Right cardiac atrium (tissue), 5 donors: ENCODE measurements at regions of chr18 and their contacts with region 1.

Region 1: DNA sequence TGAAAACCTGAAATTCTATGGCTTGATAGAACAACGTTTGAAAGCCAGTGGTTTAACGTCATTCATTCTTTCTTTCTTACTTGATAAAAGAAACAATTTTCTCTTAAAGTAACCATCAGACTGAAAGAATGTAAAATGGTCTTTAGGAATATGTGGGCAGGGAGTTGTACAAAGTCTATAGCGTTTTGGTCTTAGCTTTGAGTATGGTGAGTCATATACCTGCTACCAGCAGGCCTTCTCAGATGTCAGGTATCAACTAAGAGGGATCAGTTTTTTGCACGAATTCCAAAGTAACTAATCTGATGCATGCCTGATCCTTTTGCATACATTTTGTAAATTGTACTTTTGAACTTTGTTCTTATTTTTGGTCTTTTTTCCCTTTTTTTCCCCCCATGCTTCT is 101.5 kb upstream of the DSEL start:
- DNase-seq: no peak
- ATAC-seq: no peak
- H3K4me3 ChIP-seq: no peak overlapping the region
- H3K27ac ChIP-seq: no peak overlapping the region
- H3K4me1 ChIP-seq: no peaks in the 10 kb centered on the region
- H3K27me3 ChIP-seq: no peaks in the 10 kb centered on the region

Region 2: DNA sequence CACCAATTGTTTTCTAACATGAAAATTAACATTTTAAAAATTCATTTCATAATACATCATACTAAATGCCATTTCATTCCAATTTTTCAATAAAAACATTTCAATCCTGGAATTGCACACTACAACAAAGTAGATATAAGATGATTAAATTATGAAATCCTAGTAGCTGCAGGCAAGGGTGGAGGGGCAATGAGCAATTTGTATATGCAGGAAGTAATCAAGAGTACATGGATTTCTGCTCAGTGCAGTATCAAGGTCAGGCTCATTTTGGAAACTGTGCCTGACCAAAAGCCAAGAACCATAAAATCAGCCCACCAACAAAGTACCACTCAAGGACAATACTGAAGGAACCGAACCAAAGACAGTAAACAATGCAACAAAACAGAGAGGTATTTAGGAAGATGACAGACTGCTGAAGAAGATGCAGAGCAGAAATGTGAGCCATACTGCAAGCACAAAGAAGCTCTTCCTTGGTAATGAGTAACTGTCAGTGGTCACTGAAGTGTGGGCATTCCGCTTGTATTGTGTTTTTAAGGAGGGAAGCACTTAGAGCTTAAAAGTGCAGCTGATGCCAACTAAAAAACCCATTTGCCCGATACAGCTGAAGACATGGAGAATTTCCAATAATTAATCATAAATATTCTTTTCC is 67.1 kb before region 1 on chr18:
- intact Hi-C with region 1: loop called in 1 of 4 experiments (anchors 2 kb)
- DNase-seq: no peak
- ATAC-seq: no peak
- H3K4me3 ChIP-seq: no peak overlapping the region
- H3K27ac ChIP-seq: no peak overlapping the region
- H3K4me1 ChIP-seq: no peaks in the 10 kb centered on the region
- H3K27me3 ChIP-seq: no peaks in the 10 kb centered on the region